Activated CD4-positive, alpha-beta T cell treated with anti-CD3 and anti-CD28 coated beads, Interleukin-2, amount 10 ng/mL, durations not matched to agents 24 days and 14 days (primary cell): ENCODE measurements at regions of chr6 and their contacts with region 1.

Region 1: DNA sequence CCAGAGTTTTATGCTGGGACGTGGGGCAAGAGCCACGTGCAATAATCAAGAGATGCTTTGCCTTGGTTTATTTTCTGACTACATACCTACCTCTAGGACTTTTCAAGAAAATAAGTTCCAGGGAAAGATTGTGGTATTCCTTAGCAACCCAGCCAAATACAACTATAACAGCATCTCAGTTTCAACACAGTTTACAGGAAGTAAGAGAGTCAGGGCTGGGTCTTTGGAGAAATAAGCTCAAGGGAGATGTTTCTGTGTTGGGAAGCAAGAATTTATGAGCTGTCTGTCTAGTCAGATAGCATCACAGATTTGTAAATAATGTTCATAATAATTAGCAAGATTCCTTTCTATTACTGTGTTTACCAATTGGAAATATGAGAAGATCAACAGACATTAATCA is 35.1 kb downstream of the MAP3K5 start:
- DNase-seq: no peak
- H3K4me3 Mint-ChIP-seq: no peak overlapping the region
- H3K27ac Mint-ChIP-seq: no peak overlapping the region
- H3K4me1 Mint-ChIP-seq: peaks cover 64% of the 10 kb centered on the region
- H3K27me3 Mint-ChIP-seq: no peaks in the 10 kb centered on the region

Region 2: DNA sequence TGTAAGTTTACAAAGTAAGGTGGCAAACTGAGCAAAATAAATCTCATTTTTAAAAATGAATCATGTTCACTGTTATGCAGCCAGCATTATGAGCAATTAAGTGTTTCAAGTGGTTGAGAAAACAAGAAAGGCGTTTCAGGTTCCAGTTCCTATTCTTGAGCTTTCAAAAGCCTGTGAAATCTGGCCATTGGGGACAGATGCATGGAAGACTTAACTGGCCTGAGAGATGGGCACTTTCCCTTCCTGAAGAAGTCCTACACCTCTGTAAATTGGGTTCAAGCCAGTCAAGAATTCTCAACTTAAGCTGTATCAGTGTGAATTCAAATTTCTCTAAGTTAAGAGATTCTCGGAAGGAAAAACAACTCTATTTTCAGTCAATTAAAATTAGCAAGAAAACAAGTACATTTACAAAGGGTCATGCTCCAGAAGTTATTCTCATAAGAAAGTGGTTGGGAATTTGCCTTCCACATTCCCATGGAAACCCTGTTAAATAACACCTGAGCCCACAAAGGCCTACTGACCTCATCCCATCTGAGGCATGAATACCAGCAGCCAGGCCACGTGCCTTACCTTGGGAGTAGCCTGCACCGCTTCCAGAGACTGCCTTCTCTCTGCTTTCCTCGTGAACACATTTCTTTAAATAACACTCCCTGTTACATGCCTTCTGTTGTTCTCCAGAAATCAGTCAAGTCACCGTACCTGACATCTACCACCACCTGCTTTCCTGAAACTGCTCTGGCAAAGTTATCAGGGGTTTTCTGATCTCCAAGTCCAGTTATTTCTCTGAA is 15.7 kb after region 1 on chr6:
- intact Hi-C with region 1: loop called (anchors 2 kb)
- DNase-seq: no peak
- H3K4me3 Mint-ChIP-seq: no peak overlapping the region
- H3K27ac Mint-ChIP-seq: peak overlapping the region; percentile 11
- H3K4me1 Mint-ChIP-seq: peaks cover 43% of the 10 kb centered on the region
- H3K27me3 Mint-ChIP-seq: no peaks in the 10 kb centered on the region

Region 3: GRCh38 chr6:136783495-136784270 is 26.5 kb after region 1 on chr6:
- intact Hi-C with region 1: no loop called
- DNase-seq: peak; percentile 62
- H3K4me3 Mint-ChIP-seq: peak overlapping the region; percentile 23
- H3K27ac Mint-ChIP-seq: peak overlapping the region; percentile 66
- H3K4me1 Mint-ChIP-seq: peaks cover 60% of the 10 kb centered on the region
- H3K27me3 Mint-ChIP-seq: no peaks in the 10 kb centered on the region